Activated CD4-positive, alpha-beta T cell treated with anti-CD3 and anti-CD28 coated beads for 36 hours (primary cell): ENCODE measurements at regions of chr17 and their contacts with region 1.

Region 1: DNA sequence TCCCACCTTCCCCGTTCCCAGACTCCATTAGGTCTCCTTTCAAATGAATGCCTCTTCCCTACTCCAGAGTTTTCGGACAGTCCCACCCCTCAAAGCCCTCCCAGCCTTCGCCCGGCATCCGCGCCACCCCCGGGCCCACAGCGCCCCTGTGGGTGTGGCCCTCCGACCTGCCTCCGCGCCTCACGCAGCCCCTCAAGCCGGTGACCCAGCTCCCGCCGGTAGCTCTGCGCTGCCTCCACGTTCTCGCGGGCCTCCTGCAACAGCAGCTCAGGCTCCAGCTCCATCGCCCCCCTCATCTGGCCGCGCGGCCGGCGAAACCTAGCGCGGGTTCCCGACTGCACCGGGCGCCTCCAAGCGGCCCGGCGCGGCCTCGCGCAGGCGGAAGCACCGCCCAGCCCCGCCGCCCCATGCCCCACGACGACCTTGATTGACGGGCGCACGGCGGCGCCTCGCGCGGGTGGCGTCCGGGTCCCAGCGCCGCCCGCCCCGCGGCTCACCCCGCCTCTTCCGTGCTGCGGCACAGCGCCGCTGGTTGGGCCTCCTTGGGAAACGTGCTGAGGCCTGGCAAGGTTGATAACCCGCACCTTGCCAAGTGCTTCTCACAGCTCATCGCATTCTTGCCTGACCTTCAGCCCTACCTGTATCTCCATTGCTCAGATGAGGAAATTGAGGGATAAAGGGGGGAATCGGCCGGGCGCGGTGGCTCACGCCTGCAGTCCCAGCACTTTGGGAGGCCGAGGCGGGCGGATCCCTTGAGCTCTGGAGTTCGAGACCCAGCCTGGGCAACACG is at the start of gene CRLF3:
- DNase-seq: peak; percentile 95
- ATAC-seq: peak; percentile 91
- H3K4me3 Mint-ChIP-seq: peak within 1 kb of the TSS; percentile 95
- H3K27ac Mint-ChIP-seq: peak within 1 kb of the TSS; percentile 92
- H3K4me1 Mint-ChIP-seq: peaks cover 38% of the 10 kb centered on the region
- H3K27me3 Mint-ChIP-seq: no peaks in the 10 kb centered on the region
- total RNA-seq, gene CRLF3: 39.2 to 44.1 TPM

Region 2: DNA sequence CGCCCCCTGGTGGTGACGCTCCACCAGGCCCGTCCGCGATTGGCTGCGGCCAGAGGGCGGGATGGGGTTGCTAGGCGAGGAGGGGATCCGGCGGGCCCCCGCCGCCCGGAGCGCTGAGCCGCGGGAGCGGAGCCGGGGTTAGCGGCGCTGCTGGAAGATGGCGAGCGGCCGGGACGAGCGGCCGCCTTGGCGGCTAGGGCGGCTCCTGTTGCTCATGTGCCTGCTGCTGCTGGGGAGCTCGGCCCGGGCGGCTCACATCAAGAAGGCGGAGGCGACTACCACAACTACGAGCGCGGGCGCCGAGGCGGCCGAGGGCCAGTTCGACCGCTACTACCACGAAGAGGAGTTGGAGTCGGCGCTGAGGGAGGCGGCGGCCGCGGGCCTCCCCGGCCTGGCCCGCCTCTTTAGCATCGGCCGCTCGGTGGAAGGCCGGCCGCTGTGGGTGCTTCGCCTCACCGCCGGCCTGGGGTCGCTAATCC is 445.7 kb before region 1 on chr17 and contains the start of gene CPD:
- CTCF ChIA-PET with region 1: no interaction called
- POLR2A ChIA-PET with region 1: no interaction called
- intact Hi-C with region 1: loop called in 1 of 2 experiments (anchors 1 kb)
- DNase-seq: peak; percentile 98
- ATAC-seq: peak; percentile 87
- H3K4me3 Mint-ChIP-seq: peak within 1 kb of the TSS; percentile 82
- H3K27ac Mint-ChIP-seq: peak within 1 kb of the TSS; percentile 80
- H3K4me1 Mint-ChIP-seq: peaks cover 63% of the 10 kb centered on the region
- H3K27me3 Mint-ChIP-seq: no peaks in the 10 kb centered on the region
- total RNA-seq, gene CPD: 29.0 to 36.3 TPM

Region 3: DNA sequence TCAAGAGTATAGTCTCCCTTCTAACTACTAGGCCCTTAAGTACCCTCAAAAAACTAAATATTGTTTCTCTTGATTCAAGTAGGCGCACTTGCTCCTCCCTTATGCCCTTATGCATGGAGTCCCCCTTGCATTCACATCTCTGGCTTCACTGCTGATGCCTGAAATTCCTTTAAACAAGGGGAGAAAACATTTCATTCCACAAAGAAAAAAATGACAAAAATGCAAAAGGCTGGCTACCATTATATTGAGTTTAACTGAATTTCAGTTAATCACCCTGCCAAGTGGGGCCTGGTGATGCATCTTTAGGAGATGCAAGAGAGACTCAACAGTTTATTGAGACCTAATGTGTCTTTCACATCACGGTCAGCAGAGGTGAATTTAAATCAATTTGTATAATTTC is 35.6 kb before region 1 on chr17:
- CTCF ChIA-PET with region 1: interaction called, 7 read pairs
- POLR2A ChIA-PET with region 1: interaction called, 3 read pairs
- intact Hi-C with region 1: loop called in 1 of 2 experiments (anchors 5 kb)
- DNase-seq: no peak
- ATAC-seq: no peak
- H3K4me3 Mint-ChIP-seq: no peak overlapping the region
- H3K27ac Mint-ChIP-seq: peak overlapping the region; percentile 69
- H3K4me1 Mint-ChIP-seq: peaks cover 18% of the 10 kb centered on the region
- H3K27me3 Mint-ChIP-seq: no peaks in the 10 kb centered on the region

Region 4: DNA sequence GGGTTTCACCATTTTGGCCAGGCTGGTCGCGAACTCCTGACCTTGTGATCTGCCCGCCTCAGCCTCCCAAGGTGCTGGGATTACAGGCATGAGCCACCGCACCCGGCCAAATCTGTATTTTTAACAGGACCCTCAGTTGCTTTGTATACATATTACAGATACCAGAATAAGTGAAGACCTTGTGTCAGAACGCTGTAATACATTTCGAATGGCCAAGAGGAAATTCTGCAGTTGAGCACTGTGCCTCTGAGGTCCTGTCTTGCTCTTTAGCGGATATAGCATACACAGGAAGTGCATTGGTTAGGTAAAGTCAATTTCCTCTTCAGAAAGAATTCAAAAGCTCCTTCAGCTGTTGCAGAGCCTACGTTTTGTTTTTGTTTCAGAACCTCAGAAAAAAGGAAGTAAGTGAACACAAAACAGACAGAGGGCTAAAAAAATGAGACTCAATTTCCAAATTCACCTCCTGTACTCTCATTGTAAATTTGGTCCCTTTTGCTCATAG is 15.7 kb before region 1 on chr17:
- CTCF ChIA-PET with region 1: interaction called, 111 read pairs
- POLR2A ChIA-PET with region 1: interaction called, 7 read pairs
- intact Hi-C with region 1: loop called (anchors 1 kb)
- DNase-seq: peak; percentile 49
- ATAC-seq: peak; percentile 79
- H3K4me3 Mint-ChIP-seq: peak overlapping the region; percentile 76
- H3K27ac Mint-ChIP-seq: peak overlapping the region; percentile 97
- H3K4me1 Mint-ChIP-seq: peaks cover 71% of the 10 kb centered on the region
- H3K27me3 Mint-ChIP-seq: no peaks in the 10 kb centered on the region

Region 5: DNA sequence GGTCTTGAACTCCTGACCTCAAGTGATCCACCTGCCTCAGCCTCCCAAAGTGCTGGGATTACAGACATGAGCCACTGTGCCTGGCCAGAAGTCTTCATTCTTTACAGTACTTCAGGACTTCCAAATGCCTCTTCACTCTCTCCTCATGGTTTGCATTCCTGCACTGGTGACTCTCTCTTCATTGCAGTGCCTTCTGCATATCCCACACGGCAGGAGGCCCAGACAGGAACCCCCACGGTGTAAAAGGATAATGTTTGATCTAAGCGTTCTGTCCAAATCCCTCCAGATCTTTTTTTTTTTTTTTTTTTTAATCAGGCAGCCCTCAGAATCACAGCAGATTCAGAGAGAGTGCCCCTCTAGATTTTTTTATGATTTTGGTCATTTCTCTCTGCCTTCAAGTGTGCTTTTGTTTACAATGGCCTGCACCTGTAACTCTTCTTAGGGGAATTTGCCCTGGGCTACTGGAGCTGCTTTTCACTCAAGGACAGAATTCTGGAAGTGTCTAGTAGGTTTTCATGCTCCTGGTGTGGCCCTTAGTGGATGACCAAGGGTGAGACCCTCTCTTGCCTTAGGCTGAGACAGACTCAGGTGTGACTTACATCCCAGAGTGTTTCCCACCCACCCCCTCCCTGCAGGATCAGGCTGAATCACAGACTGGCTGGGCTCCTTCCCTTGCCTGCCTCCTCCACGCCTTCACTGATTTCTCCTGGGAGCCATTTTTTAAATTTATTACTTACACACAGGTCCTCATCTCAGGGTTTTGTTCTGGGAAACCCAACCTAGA is 250.4 kb after region 1 on chr17:
- CTCF ChIA-PET with region 1: no interaction called
- POLR2A ChIA-PET with region 1: no interaction called
- intact Hi-C with region 1: no loop called
- DNase-seq: no peak
- ATAC-seq: no peak
- H3K4me3 Mint-ChIP-seq: no peak overlapping the region
- H3K27ac Mint-ChIP-seq: no peak overlapping the region
- H3K4me1 Mint-ChIP-seq: no peaks in the 10 kb centered on the region
- H3K27me3 Mint-ChIP-seq: no peaks in the 10 kb centered on the region

Region 6: GRCh38 chr17:31494259-31495021 is 669.9 kb after region 1 on chr17:
- CTCF ChIA-PET with region 1: no interaction called
- POLR2A ChIA-PET with region 1: no interaction called
- intact Hi-C with region 1: loop called in 1 of 2 experiments (anchors 5 kb)
- DNase-seq: peak; percentile 82
- ATAC-seq: peak; percentile 86
- H3K4me3 Mint-ChIP-seq: peak overlapping the region; percentile 58
- H3K27ac Mint-ChIP-seq: peak overlapping the region; percentile 97
- H3K4me1 Mint-ChIP-seq: peaks cover 91% of the 10 kb centered on the region
- H3K27me3 Mint-ChIP-seq: no peaks in the 10 kb centered on the region